GM10248 (cell line): ENCODE measurements at regions of chr5 and their contacts with region 1.

Region 1: DNA sequence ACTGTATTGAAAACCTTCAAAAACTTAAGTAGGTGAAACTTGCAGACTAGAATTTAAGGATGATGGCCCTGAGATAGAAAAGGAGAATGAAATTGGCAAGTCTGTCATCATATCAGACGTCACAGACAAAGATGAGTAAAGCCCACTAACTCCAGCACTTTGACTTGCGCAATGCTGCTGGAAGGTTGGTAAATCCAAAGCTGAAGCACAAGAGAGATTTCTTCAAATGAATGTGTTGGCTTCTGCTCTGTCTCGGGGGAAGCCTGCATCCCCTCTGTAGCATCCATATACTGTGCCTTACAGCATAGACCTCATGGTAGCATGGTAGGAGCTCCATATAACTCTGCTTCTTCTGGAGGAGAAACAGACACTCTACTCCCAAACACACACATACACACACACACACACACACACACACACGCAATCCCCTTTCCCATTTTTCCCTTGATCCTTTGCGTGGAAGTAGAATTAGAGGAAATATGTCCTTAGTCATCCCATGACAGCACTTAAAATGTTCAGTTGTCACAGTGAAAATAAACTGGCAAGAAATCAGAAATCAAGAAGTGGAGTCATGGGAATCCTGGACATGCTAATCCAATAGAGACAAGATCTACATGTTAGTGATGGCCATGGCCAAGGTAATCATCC is 241.5 kb downstream of the NR3C1 start:
- DNase-seq: no peak
- CTCF ChIP-seq: no peak

Region 2: GRCh38 chr5:143174714-143175398 is 12.8 kb after region 1 on chr5:
- CTCF ChIA-PET with region 1: interaction called, 22 read pairs
- POLR2A ChIA-PET with region 1: interaction called, 3 read pairs
- DNase-seq: peak; percentile 54
- CTCF ChIP-seq: no peak